Panc1 (cell line): ENCODE measurements at regions of chr1 and their contacts with region 1.

Region 1: DNA sequence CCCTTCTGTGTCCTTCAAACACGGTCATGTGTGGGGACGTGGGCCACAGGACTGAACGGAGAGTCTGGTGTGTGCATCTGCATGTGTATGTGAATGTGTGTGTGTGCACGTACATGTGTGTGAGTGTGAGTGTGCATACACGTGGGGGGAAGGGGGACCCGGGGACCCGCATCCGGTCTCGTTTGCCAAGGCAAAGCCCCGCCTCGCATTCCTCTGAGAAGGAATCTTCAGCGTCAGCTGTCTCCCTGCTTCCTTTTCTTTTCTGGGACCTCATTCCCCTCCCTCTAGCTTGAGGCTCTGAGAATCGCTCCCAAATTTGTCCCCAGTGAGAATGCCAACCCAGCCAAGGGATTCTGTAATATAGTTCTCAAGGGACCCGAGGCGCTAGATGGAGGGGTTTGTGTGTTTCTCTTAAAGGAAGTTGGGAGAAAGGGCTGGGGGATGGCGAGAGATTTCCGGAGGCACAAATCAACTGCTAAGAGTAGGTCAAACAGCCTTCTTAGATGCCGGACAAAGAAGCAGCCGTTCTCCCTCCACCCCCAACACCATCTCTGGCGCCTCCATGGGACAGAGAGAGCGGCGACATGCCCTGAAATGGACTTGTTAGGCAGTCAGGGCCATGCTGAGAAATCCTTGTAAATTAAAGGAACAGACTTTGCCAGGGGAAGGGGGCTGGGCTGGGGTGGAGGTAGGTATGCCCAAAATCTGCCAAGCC is 6.6 kb downstream of the IFFO2 start:
- DNase-seq: no peak
- ATAC-seq: peak; percentile 23
- H3K4me3 ChIP-seq: peak overlapping the region; percentile 71 to 85
- H3K27ac ChIP-seq: peak overlapping the region; percentile 89
- H3K4me1 ChIP-seq: peaks cover 82% of the 10 kb centered on the region
- H3K27me3 ChIP-seq: no peaks in the 10 kb centered on the region
- CTCF ChIP-seq: no peak

Region 2: GRCh38 chr1:19010995-19011844 is 61.4 kb after region 1 on chr1:
- CTCF ChIA-PET with region 1: no interaction called
- POLR2A ChIA-PET with region 1: no interaction called
- in situ Hi-C with region 1: no loop called
- intact Hi-C with region 1: loop called (anchors 5 kb)
- DNase-seq: peak; percentile 96
- ATAC-seq: peak; percentile 80
- H3K4me3 ChIP-seq: peak overlapping the region; percentile 16 to 23
- H3K27ac ChIP-seq: peak overlapping the region; percentile 97
- H3K4me1 ChIP-seq: peaks cover 58% of the 10 kb centered on the region
- H3K27me3 ChIP-seq: no peaks in the 10 kb centered on the region
- CTCF ChIP-seq: no peak

Region 3: DNA sequence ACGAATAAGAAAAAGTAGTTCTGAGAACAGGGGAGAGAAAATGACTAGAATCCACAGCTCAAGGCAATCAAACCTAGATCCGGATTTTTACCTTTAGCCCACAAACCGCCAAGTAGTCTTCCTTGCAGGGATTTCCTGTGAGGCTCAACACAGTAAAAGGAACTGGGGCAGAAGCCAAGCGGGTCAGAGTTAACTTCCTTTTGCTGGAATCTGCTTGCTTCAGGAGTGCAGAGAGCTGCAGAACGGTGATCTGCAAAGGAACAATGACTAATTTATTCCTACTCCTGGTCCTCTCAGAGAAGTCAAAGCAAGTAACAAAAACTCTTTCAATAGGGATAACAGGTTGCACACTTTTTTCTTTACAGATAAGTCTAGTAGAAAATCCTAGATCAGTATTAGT is 206.8 kb after region 1 on chr1:
- CTCF ChIA-PET with region 1: no interaction called
- POLR2A ChIA-PET with region 1: no interaction called
- in situ Hi-C with region 1: no loop called
- intact Hi-C with region 1: no loop called
- DNase-seq: no peak
- ATAC-seq: peak; percentile 64
- H3K4me3 ChIP-seq: no peak overlapping the region
- H3K27ac ChIP-seq: no peak overlapping the region
- H3K4me1 ChIP-seq: peaks cover 4% of the 10 kb centered on the region; the same call in 1 of the 2 replicates
- H3K27me3 ChIP-seq: no peaks in the 10 kb centered on the region
- CTCF ChIP-seq: no peak